Panc1 (cell line): ENCODE measurements at regions of chr12 and their contacts with region 1.

Region 1: DNA sequence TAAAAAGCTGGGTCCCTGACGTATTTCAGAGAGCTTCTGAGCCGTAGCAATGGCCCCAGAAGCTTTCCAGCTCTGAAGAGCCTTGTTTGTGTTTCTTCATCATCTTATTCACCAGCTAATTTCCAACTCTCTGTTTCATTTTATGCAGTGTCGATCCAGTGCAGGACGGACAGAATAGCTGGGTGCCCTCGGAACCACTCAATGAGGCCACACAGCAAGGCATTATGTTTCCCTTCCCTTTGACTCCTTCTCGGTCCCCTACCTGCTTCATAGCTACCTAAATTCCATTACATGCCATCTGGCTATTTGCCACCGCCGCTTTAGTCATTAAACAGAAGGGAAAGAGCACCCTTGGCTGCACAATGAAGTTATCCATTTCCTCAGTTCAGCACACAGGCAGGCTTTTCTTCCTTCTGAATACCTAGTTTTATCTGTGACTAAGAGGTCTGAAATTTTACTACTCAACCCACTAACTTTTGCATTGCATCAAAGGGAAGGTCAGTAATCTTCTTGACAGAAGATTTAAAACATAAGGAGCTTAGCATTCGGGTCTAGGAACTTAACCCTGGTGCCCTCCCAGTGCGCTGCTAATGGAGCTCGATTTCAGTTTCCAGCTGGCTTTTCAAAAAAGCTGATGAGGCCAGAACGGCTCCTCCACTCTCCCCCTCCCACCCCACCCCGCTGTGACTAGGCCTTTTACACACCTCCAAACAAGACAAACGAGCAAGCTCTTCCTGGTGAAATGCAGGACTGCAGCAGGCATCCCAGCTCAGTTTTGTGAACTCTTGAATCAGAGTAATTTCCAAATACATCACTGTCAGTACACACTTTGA is 176.8 kb downstream of the GXYLT1 start:
- DNase-seq: no peak
- ATAC-seq: no peak
- H3K4me3 ChIP-seq: no peak overlapping the region
- H3K27ac ChIP-seq: no peak overlapping the region
- H3K4me1 ChIP-seq: no peaks in the 10 kb centered on the region
- H3K27me3 ChIP-seq: no peaks in the 10 kb centered on the region
- CTCF ChIP-seq: no peak

Region 2: DNA sequence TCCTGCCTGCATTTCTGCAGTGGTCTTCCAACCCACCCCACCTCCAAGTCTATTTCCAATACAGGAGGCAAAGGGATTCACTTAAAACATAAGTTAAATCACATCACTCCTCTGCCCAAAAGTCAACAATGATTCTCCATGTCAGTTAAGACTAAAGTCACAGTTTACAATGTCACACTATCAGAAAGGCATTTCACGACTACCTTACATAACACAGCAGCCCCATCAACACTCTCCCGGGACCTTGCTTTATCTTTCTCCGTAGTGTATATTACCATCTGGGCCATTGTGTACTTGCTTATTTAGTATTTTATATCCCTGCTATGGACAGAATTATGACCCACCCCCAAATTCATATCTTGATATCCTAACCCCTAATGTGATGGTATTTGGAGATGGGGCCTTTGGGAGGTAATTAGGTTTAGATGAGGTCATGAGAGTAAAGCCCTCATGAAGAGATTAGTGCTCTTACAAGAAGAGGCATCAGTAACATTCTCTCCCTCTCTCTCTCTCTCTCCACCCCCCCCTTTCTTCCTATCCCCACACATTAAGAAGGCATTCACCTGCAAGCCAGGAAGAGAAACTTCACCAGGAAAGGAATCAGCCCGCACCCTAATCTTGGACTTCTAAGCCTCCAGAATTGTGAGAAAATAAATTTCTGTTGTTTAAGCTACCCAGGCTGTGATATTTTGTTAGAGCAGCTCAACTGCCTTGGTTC is 64.1 kb after region 1 on chr12:
- CTCF ChIA-PET with region 1: interaction called, 16 read pairs
- POLR2A ChIA-PET with region 1: no interaction called
- in situ Hi-C with region 1: no loop called
- intact Hi-C with region 1: no loop called
- DNase-seq: no peak
- ATAC-seq: no peak
- H3K4me3 ChIP-seq: no peak overlapping the region
- H3K27ac ChIP-seq: no peak overlapping the region
- H3K4me1 ChIP-seq: no peaks in the 10 kb centered on the region
- H3K27me3 ChIP-seq: no peaks in the 10 kb centered on the region
- CTCF ChIP-seq: no peak

Region 3: DNA sequence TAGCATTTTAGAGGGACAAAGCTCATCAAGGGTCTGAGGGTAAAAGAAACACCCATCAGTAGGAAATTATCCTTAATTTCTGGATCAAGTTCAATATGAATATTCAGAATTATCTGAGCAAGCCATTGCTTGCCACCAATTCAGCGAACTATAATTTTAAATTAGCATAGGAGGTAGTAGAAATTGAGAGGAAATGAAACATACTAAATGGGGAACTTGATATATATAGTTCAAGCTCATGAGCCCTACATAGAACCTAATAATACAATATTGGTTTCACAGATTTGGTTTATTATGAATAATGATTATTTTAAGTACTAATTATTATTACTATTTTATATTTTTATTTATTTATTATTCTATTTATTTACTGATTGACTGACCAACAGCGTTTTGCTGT is 218.9 kb after region 1 on chr12:
- CTCF ChIA-PET with region 1: no interaction called
- POLR2A ChIA-PET with region 1: no interaction called
- in situ Hi-C with region 1: no loop called
- intact Hi-C with region 1: no loop called
- DNase-seq: no peak
- ATAC-seq: no peak
- H3K4me3 ChIP-seq: no peak overlapping the region
- H3K27ac ChIP-seq: no peak overlapping the region
- H3K4me1 ChIP-seq: no peaks in the 10 kb centered on the region
- H3K27me3 ChIP-seq: no peaks in the 10 kb centered on the region
- CTCF ChIP-seq: no peak